ENCODE measurements at regions of chr4 and their contacts with region 1.

Region 1: DNA sequence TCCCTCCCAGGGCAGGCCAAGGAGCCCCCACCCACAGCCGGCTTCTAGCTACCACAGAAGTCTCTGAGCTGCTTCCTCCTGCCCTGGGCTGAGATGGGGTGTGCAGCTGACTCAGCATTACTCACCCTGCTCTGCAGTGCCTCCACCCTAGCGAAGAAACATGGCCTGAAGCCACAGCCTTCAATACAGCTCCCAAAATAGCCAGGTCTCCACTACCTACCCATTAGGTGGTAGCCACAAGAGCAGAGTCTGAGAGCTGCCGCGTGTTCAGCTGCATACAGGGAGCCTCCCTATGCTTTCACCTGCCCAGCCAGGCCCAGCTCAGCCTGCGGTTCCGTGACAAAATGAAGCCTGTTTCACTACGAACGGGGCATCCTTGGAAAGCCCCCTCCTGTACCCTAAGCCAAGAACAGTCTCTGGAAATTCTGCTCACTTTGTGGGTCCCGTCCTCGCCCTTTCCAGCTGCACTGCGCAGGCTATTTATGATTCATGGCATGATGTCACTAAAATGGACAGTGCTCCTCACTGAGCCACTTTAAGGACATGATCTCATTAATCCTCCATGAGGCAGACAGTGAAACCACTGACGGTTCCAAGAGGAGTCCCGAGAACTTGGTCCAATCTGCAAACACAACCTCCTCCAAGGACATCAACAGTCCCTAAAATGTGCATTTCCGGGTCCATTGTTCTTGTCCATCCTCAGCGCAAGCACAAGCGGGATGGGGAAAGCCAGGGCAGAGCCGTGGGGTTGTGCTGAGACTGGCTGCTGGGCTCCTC is 20.2 kb downstream of the WDR1 start:
- DNase-seq: no peak
- H3K4me3 ChIP-seq: no peak overlapping the region
- H3K27ac ChIP-seq: no peak overlapping the region
- H3K4me1 ChIP-seq: peaks cover 0 to 16% (median 9%) of the 10 kb centered on the region in 4 experiments; a peak in 6 of 7 replicates
- H3K27me3 ChIP-seq: no peaks in the 10 kb centered on the region
- CTCF ChIP-seq: no peak
- EP300 ChIP-seq: no peak
- POLR2A ChIP-seq: no peak
- RAD21 ChIP-seq: no peak

Region 2: DNA sequence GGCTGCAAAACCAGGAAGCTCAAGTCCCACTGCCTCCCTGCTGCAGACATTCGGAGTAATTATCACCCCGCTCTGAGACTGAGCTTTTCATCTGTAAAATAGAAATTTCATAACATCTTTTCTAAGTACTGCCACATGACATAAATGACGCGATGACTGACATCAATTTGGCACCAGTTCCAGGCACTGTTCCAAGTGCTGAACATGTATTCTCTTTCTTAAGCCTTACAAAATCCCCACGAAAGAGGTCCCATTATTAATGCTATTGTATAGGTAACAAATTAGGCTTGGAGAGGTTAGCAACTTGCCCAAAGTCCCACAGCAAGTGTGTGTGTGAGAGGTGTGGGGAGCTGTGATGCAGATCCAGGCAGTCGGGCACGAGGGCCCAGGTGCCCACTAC is 131.5 kb before region 1 on chr4:
- CTCF ChIA-PET with region 1: no interaction called
- POLR2A ChIA-PET with region 1: no interaction called
- DNase-seq: no peak
- H3K4me3 ChIP-seq: no peak overlapping the region
- H3K27ac ChIP-seq: no peak overlapping the region
- H3K4me1 ChIP-seq: no peaks in the 10 kb centered on the region; a peak in 1 of 7 replicates
- H3K27me3 ChIP-seq: 0 out of 7 replicates have a peak, but pooled peaks cover 0 to 1% (median 0%) of the 10 kb centered on the region in 4 experiments
- CTCF ChIP-seq: no peak
- EP300 ChIP-seq: no peak
- POLR2A ChIP-seq: no peak
- RAD21 ChIP-seq: no peak

Region 3: GRCh38 chr4:10083861-10084641 is 12.3 kb before region 1 on chr4:
- CTCF ChIA-PET with region 1: interaction called, 15 read pairs
- POLR2A ChIA-PET with region 1: interaction called, 11 read pairs
- DNase-seq: no peak
- H3K4me3 ChIP-seq: no peak overlapping the region
- H3K27ac ChIP-seq: no peak overlapping the region
- H3K4me1 ChIP-seq: no peaks in the 10 kb centered on the region
- H3K27me3 ChIP-seq: no peaks in the 10 kb centered on the region
- CTCF ChIP-seq: no peak
- EP300 ChIP-seq: no peak
- POLR2A ChIP-seq: no peak
- RAD21 ChIP-seq: no peak